IMR-90 (cell line): ENCODE measurements at regions of chr14 and their contacts with region 1.

Region 1: DNA sequence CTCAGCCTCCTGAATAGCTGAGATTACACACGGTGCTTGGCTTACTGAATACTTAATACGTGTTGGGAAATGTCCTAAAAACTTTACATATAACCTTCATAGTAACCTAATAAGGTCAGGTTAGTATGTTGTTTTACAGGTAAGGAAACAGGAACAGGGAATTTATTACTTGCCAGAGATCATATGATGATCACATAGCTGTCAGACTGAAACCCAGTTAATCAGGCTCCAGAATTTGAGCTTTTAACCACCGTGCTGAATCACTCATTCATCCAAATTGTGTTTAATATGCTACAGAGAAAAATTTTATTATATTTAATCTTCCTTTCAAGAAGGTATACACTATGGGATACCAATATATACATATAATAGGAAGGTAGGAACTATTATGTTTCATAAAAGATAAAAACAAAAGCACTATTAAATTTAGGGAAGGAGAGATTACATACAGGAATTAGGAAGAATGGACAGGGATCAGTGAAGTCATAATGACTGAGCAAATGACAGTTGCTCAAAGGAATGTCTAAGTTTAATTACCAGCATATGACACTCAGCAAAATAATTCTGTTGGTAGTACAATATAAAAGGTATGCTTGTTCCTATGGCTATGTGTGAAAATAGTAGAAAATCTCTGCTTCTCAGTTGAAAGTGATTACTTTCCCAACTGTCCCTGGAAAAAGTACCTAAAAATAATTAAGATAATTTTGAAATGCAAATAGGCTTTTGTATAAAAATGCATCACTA is 59.3 kb downstream of the HEATR5A start:
- DNase-seq: peak; percentile 64
- ATAC-seq: peak; percentile 66
- H3K4me3 ChIP-seq: no peak overlapping the region
- H3K27ac ChIP-seq: no peak overlapping the region
- H3K4me1 ChIP-seq: peaks cover 3% of the 10 kb centered on the region
- H3K27me3 ChIP-seq: no peaks in the 10 kb centered on the region
- CTCF ChIP-seq: no peak
- POLR2A ChIP-seq: no peak
- RAD21 ChIP-seq: no peak

Region 2: GRCh38 chr14:30980980-30981379 is 380.1 kb before region 1 on chr14:
- CTCF ChIA-PET with region 1: no interaction called
- POLR2A ChIA-PET with region 1: no interaction called
- dilution Hi-C with region 1: no loop called
- in situ Hi-C with region 1: loop called (anchors 25 kb)
- intact Hi-C with region 1: loop called (anchors 2 kb)
- DNase-seq: no peak
- ATAC-seq: no peak
- H3K4me3 ChIP-seq: no peak overlapping the region
- H3K27ac ChIP-seq: peak overlapping the region; percentile 7; the same call in 1 of the 2 replicates
- H3K4me1 ChIP-seq: no peaks in the 10 kb centered on the region
- H3K27me3 ChIP-seq: no peaks in the 10 kb centered on the region
- CTCF ChIP-seq: no peak
- POLR2A ChIP-seq: no peak
- RAD21 ChIP-seq: no peak

Region 3: GRCh38 chr14:30994681-30995620 is 366.1 kb before region 1 on chr14:
- CTCF ChIA-PET with region 1: no interaction called
- POLR2A ChIA-PET with region 1: no interaction called
- dilution Hi-C with region 1: no loop called
- in situ Hi-C with region 1: loop called (anchors 25 kb)
- intact Hi-C with region 1: no loop called
- DNase-seq: peak; percentile 32
- ATAC-seq: no peak; the same call in 1 of the 2 replicates
- H3K4me3 ChIP-seq: no peak overlapping the region
- H3K27ac ChIP-seq: no peak overlapping the region
- H3K4me1 ChIP-seq: peaks cover 9% of the 10 kb centered on the region
- H3K27me3 ChIP-seq: no peaks in the 10 kb centered on the region
- CTCF ChIP-seq: no peak
- POLR2A ChIP-seq: no peak
- RAD21 ChIP-seq: no peak

Region 4: GRCh38 chr14:31122098-31122611 is 238.9 kb before region 1 on chr14:
- CTCF ChIA-PET with region 1: no interaction called
- POLR2A ChIA-PET with region 1: no interaction called
- dilution Hi-C with region 1: no loop called
- in situ Hi-C with region 1: no loop called
- intact Hi-C with region 1: loop called (anchors 5 kb)
- DNase-seq: peak; percentile 23
- ATAC-seq: no peak
- H3K4me3 ChIP-seq: no peak overlapping the region
- H3K27ac ChIP-seq: no peak overlapping the region
- H3K4me1 ChIP-seq: no peaks in the 10 kb centered on the region
- H3K27me3 ChIP-seq: no peaks in the 10 kb centered on the region
- CTCF ChIP-seq: no peak
- POLR2A ChIP-seq: no peak
- RAD21 ChIP-seq: no peak

Region 5: DNA sequence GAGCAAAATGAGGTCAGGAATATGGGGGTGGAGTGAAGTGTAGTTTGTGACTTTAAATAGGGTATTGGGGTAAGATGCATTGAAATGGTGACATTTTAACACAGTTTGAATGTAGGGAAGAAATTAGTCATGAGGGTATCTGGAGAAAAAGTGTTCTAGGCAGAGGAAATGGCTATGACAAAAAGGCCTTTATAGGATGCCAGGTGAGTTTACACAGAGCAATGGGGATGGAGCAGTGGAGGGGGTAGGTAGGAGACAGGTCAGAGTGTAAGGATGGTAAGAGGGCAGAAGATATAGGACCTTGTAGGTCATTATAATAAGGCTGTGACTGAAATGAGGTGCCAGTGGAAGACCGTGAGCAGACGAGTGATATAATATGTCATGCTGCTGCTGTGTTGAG is 28.9 kb after region 1 on chr14:
- CTCF ChIA-PET with region 1: no interaction called
- POLR2A ChIA-PET with region 1: no interaction called
- dilution Hi-C with region 1: no loop called
- in situ Hi-C with region 1: no loop called
- intact Hi-C with region 1: no loop called
- DNase-seq: no peak
- ATAC-seq: no peak
- H3K4me3 ChIP-seq: no peak overlapping the region
- H3K27ac ChIP-seq: no peak overlapping the region
- H3K4me1 ChIP-seq: 0 out of 2 replicates have a peak, but pooled peaks cover 2% of the 10 kb centered on the region
- H3K27me3 ChIP-seq: no peaks in the 10 kb centered on the region
- CTCF ChIP-seq: no peak
- POLR2A ChIP-seq: no peak
- RAD21 ChIP-seq: no peak